ENCODE measurements at regions of chr2 and their contacts with region 1.

Region 1: DNA sequence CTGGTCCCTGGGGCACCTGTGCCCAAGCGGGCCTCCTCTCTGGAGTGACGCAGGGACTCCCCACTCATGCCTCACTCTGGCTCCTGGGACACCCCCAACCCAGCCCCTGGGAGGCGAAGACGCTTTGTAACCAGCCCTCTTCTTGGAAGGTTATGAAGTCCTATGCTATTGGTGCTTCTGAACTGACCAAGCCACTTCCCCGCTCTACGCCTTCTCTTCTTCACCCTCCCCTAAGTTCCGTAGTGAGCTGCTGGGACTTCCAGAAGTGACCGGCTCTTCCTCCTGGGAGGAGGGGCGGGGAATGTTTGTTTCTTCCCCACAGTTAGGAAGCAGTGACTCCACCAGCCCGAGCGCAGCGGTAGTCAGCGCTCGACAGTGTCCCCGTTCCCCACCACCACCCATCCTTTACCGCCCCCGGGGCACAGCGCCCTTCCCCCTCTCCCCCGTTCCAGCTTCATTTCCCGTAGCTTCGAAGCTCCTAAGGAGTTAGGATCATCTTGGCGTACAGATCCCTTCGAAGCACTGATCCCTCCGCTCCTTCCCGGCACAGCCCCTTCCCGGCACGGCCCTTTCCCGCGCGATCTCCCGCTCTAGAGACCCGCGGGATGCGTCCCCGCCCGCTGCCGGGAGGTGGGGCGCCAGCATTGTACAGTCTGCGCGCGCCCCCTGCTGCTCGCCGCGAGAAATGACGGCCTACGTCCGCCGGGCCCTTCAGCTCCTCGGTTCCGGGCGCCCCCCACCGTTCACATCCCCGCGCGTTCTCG is 25.3 kb upstream of the NOTO start:
- DNase-seq: no peak
- H3K4me3 ChIP-seq: peak overlapping the region; percentile 71
- CTCF ChIP-seq: peak; percentile 100

Region 2: DNA sequence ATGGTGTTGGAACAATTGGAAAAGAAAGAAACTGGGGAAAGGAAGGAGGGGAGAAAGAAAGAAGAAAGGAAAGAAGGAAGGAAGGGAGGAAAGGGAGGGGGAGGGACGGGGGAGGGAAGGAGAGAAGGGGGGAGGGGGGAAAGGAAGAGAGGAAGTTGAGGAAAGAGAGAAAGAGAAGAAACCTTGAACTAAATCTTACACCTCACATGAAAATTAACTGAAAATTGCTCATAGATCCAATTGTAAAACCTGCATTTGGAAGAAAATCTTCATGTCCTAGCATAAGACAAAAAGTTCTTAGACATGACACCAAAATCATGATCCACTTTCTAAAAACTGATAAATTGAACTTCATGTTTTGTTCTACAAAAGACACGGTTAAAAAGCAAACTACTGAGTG is 515.1 kb before region 1 on chr2:
- CTCF ChIA-PET with region 1: no interaction called
- POLR2A ChIA-PET with region 1: no interaction called
- DNase-seq: no peak
- H3K4me3 ChIP-seq: no peak overlapping the region
- CTCF ChIP-seq: no peak

Region 3: DNA sequence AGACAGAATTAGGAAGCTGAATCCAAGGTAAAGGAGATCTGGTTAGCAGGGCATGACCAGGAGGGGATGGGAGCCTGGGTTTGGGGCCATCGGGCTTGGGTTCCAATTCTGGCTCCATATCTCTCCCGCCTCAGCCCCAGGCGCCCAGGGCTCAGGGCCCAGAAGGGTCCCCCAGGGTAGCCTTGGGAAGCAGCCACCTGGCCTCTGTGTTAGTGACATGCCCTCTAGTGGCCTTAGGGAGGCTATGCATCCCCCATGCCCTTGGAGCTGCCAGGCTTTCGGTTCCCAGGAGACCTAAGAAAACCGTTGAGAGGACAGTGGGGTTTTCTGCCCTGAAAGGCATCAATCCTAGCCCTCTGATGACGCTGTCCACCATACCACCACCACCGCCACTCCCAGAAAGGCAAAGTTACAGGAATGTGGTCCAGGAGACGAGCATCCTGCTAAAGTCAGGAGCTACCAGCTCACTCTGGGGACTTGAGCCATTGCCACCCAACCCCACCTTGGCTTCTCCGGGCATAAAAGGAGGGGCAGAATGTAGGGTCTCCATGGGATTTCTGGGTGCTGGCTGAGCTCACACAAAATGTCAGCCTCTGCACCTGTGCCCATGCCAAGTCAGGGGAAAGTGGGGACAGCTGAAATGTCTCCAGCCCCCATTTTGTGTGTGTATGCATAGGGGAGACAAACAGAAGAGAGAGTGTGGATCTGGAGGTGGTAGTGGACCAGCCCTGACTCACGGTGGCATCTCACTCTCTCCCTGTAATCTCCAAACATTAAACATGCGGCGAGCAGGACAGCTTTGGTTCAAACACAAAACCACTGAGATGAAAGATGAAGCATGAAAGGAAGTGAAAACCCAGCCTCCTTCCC is 203.3 kb before region 1 on chr2:
- CTCF ChIA-PET with region 1: interaction called, 41 read pairs
- POLR2A ChIA-PET with region 1: no interaction called
- DNase-seq: no peak
- H3K4me3 ChIP-seq: no peak overlapping the region
- CTCF ChIP-seq: peak; percentile 91

Region 4: DNA sequence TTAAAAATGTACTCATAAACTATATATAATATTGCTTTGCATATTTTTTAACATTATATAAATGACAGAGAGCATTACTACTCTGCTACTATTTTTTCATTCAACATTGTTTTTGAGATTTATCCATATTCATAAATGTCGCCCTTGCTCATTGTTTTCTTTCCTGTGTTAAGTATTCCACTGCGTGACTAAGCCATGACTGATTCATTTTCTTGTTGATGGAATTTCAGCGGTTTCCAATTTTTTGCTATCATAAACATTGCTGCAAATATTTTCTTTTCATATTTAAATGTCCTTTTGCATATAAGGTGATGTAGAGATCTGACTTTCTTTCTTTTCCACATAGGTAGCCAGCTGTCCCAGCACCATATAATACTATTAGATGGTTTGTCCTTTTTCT is 163.1 kb before region 1 on chr2:
- CTCF ChIA-PET with region 1: interaction called, 14 read pairs
- POLR2A ChIA-PET with region 1: no interaction called
- DNase-seq: no peak
- H3K4me3 ChIP-seq: no peak overlapping the region
- CTCF ChIP-seq: no peak

Region 5: DNA sequence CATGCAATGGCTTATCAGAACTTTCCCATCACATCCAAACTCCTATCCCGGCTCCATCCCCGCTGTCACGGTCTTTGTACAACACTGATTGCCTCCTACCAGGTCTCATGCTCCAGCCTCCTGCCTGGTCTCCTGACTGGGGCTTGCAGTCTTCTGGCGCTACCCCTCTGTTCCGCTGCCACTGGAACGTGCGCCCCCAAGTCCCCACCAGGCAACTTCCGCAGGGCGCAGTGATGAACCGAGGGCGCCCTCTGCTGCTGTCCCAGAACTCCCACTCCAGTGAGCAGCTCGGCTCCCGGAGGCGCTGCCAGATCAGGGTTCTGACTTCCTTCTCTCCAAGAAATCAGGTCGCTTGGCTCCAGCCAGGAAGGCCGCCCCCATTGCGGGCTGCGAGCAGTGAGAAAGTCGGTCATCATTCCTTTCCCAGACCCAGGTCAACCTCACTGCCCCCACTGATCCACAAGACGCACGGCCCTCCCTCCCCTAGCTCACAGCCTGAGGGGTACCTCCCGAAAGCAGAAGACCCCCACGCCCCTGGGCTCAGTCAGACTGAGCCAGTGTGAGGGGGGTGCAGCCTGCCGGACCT is 20.4 kb before region 1 on chr2:
- CTCF ChIA-PET with region 1: interaction called, 16 read pairs
- POLR2A ChIA-PET with region 1: no interaction called
- DNase-seq: no peak
- H3K4me3 ChIP-seq: peak overlapping the region; percentile 44
- CTCF ChIP-seq: peak; percentile 96

Region 6: DNA sequence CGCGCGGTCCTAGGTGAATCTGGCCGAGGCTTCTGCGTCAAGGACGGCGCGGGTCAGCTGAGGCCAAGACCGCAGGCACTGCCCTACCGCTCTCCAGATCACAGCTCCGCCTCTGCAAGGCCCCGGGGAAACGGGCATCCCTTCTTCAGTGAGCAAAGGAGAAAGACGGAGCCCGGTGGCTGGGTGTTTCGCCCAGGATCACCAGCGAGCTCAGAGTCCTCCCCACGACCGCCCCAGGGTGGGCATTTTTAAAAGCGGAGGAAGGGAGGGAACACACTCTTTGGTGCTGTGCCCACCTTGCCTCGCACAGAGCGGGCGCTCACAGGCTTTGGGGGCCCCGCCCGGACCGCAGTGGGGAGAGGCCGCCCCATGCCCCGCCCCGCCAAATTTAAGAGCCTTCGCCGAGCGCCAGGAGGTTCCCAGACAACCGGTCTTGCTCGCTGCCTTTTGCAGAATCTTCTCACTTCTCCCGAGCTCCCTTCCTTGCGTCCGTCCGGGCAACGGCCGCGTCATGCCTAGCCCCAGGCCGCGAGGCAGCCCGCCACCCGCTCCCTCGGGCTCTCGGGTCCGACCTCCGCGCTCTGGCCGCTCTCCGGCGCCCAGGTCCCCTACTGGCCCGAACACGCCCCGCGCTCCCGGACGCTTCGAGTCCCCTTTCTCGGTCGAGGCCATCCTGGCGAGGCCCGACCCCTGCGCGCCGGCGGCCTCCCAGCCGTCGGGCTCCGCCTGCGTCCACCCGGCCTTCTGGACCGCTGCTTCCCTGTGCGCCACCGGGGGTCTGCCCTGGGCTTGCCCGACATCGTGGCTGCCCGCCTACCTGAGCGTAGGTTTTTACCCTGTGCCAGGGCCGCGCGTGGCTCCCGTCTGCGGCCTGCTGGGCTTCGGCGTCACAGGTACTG is 25.3 kb after region 1 on chr2 and contains the start of gene NOTO:
- CTCF ChIA-PET with region 1: interaction called, 111 read pairs
- POLR2A ChIA-PET with region 1: no interaction called
- DNase-seq: no peak
- H3K4me3 ChIP-seq: peak within 1 kb of the TSS; percentile 16
- CTCF ChIP-seq: no peak

Measured in AG04449 (cell line).